ENCODE measurements at regions of chr7 and their contacts with region 1.

Region 1: GRCh38 chr7:101217388-101218235 is at the starts of genes PLOD3 and ZNHIT1:
- DNase-seq: peak; percentile 84 to 98
- H3K4me3 ChIP-seq: peak within 1 kb of the TSS; percentile 72 to 78
- H3K27ac ChIP-seq: peak within 1 kb of the TSS; percentile 55 to 78
- H3K4me1 ChIP-seq: peaks cover 9 to 18% of the 10 kb centered on the region in 2 donors
- H3K27me3 ChIP-seq: no peaks in the 10 kb centered on the region
- CTCF ChIP-seq: no peak
- total RNA-seq, gene PLOD3: 165 TPM
- total RNA-seq, gene ZNHIT1: 87.9 TPM

Region 2: GRCh38 chr7:100837099-100837836 is 380.3 kb before region 1 on chr7:
- intact Hi-C with region 1: no loop called
- DNase-seq: peak; percentile 56 to 93
- H3K4me3 ChIP-seq: peak overlapping the region; percentile 35 to 55
- H3K27ac ChIP-seq: peak overlapping the region; percentile 48 to 62
- H3K4me1 ChIP-seq: peaks cover 0 to 3% of the 10 kb centered on the region in 2 donors
- H3K27me3 ChIP-seq: no peaks in the 10 kb centered on the region
- CTCF ChIP-seq: no peak

Region 3: DNA sequence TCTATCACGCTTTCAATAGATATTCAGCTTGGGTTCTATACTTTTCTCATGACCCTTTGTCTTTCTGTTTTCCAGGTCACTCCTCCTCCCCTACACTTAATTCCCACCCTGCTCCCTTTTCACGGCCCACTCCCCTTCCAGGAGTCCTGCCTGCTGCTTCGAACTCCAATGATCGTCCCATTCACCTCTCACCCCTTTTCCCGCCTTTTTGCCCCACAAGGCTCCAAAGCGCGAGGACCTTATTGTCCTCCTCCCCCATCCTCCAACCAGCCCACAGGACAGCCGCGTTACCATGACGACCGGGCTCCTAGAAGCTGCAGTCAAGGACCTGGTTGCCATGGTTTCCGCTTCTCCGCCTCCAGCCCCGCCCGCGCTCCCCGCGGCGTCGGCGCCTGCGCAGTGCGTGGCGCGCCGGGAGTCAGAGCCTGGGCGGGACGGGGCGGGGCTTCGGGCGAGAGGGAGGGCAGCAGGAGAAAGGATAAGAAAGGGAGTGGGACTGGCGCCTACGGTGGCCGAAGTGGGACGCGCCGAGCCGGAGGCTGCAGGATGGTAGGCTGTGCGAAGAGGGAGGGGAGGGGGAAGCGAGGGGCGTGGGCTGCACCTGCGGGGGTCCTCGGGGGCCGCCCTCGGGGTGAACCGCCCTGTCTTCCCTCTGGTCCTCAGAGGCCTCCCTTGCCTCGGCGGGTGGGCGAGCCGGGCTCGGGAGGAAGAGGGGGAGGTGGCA is 63.5 kb before region 1 on chr7 and contains the start of gene AP1S1:
- intact Hi-C with region 1: loop called (anchors 2 kb)
- DNase-seq: peak; percentile 72 to 94
- H3K4me3 ChIP-seq: peak within 1 kb of the TSS; percentile 73 to 87
- H3K27ac ChIP-seq: no peak within 1 kb of the TSS
- H3K4me1 ChIP-seq: peaks cover 3% of the 10 kb centered on the region in 2 donors
- H3K27me3 ChIP-seq: no peaks in the 10 kb centered on the region
- CTCF ChIP-seq: no peak
- total RNA-seq, gene AP1S1: 77.4 TPM

Region 4: DNA sequence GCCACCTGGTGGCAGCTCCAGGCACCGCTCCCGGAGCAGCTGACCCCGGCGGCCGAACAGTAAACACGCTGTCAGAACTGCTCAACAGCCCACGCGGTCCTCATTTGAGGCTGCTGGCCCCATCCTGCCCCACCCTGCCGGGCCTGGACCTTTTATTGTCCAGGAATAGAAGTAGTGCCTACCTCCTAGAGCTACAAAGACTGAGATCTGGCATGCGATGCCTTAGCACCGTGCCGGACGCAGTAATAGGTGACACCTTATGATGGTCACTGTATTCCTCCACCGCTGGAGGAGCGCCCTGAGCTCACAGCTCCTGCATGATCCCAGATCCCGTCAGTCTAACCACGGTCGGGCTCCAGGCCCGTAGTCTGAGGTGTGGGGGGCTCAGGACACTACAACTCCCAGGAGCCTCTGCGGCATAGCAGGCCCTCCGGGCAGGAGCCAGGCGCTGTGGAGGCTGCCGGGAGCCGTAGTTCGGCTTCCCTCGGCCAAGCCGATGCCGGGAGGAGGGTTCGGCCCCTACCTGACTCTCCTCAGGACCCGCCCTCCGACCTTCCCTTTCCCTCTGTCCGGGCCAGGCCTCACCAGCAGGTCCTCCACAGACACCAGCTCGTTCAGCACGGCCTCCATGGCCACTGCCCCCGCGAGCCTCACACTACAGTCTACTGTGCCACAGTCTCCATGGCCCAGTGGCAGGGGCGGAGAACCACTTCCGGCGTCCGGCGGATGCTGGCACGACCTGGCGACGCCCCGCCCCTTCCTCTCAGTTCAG is 26.9 kb after region 1 on chr7 and contains the start of gene FIS1:
- intact Hi-C with region 1: loop called (anchors 1 kb)
- DNase-seq: peak; percentile 76 to 95
- H3K4me3 ChIP-seq: peak within 1 kb of the TSS; percentile 77 to 94
- H3K27ac ChIP-seq: peak within 1 kb of the TSS; percentile 95 to 97
- H3K4me1 ChIP-seq: peaks cover 0 to 14% of the 10 kb centered on the region in 2 donors
- H3K27me3 ChIP-seq: no peaks in the 10 kb centered on the region
- CTCF ChIP-seq: peak; percentile 92 to 95 (median 95)
- total RNA-seq, gene FIS1: 266 TPM

Region 5: DNA sequence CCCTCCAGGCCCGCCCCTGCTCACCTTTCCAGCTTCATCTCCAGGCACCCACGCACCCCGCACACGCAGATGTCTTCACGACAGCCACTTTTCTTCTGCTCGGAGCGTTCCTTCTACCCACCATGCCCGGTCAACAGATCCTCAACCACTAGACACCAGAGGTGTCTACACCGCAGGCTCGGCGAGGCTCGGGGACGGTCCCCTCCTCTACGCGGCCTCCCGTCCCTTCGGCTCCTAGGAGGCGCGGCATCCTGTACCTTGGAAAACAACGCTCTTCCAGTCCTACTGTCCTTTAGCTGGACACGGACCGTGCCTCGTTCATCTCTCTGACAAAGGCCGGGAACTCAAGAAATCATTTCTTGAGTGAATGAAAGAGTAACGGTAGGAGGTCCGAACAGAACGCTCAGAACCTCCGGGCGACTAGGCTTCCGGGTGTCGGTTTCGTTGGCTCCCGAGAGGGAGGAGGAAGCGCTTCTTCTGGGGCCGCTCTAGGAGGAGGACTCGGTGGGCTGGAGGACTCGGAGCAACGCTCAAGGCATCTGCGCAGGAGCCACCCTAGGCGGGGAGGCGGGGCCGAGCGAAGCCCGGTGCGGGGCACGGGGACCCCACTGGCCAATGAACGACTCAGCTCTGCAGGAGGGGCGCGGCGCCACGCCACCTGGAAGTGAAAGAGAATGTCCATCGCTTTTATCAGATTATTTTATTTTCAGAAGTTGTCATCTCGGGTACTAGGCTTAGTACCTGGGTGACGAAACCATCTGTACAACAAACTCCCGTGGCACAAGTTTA is 34.5 kb after region 1 on chr7:
- intact Hi-C with region 1: loop called (anchors 2 kb)
- DNase-seq: peak; percentile 87 to 98
- H3K4me3 ChIP-seq: peak overlapping the region; percentile 71 to 73
- H3K27ac ChIP-seq: peak overlapping the region; percentile 41 to 75
- H3K4me1 ChIP-seq: peaks cover 8 to 10% of the 10 kb centered on the region in 2 donors
- H3K27me3 ChIP-seq: no peaks in the 10 kb centered on the region
- CTCF ChIP-seq: no peak

Region 6: GRCh38 chr7:102433219-102434038 is 1215.8 kb after region 1 on chr7 and contains the start of gene ORAI2:
- intact Hi-C with region 1: loop called (anchors 5 kb)
- DNase-seq: peak in 1 of 2 donors; percentile 87
- H3K4me3 ChIP-seq: peak within 1 kb of the TSS; percentile 74 to 76
- H3K27ac ChIP-seq: peak within 1 kb of the TSS; percentile 44 to 65
- H3K4me1 ChIP-seq: peaks cover 0 to 10% of the 10 kb centered on the region in 2 donors
- H3K27me3 ChIP-seq: no peaks in the 10 kb centered on the region
- CTCF ChIP-seq: no peak
- total RNA-seq, gene ORAI2: 45.1 TPM